Testis (tissue), 5 donors: ENCODE measurements at regions of chr14 and their contacts with region 1.

Region 1: DNA sequence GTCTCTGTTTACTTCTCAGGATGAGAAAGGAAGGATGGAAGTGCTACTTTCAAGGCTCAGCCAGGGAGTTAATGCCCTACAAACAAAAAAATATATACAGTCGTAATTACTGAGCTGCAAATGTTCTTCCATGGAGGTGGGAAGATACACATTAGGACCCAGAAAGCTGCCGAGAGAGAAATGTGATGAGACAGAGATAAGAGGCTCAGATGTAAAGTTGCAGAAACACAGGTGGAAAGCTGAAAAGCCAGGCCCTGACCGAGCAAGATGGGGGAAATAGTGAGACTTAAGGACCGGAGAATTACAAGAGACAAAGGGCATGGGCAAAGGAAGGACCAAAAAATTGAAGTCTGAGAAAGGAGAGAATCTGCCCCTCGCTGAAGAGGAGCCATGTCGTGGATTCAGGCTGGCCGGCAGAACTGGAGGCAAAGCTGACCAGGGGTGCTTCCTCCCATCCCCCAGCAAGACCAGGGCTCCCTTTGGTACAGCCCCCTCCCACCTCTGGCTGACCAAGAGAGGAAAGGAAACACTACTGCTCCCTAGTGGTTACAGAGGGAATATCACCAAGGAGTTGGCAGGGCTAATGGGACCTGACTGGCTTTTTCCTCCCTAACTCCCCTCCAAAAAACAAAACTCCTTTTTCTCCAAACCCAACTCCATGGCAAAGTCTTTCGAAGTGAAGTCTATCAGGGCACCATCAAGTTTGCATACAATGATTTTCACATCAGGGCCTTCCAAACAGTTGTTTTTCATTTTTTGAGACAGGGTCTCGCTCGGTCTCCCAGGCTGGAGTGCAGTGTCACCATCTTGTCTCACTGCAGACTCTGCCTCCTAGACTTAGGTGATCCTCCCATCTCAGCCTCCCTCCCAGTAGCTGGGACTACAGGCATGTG is 12.1 kb downstream of the ZFHX2 start:
- DNase-seq: peak; percentile 33
- H3K4me3 ChIP-seq: no peak overlapping the region
- H3K27ac ChIP-seq: no peak overlapping the region
- H3K4me1 ChIP-seq: no peaks in the 10 kb centered on the region
- H3K27me3 ChIP-seq: no peaks in the 10 kb centered on the region
- CTCF ChIP-seq: peak; percentile 52 to 83 (median 69)
- POLR2A ChIP-seq: no peak

Region 2: GRCh38 chr14:23483236-23483854 is 56.1 kb before region 1 on chr14:
- intact Hi-C with region 1: loop called (anchors 10 kb)
- DNase-seq: peak; percentile 28
- H3K4me3 ChIP-seq: no peak overlapping the region
- H3K27ac ChIP-seq: no peak overlapping the region
- H3K4me1 ChIP-seq: no peaks in the 10 kb centered on the region
- H3K27me3 ChIP-seq: no peaks in the 10 kb centered on the region
- CTCF ChIP-seq: peak in 2 of 3 experiments; percentile 6 to 14
- POLR2A ChIP-seq: no peak

Region 3: GRCh38 chr14:24037665-24038051 is 498.2 kb after region 1 on chr14:
- intact Hi-C with region 1: no loop called
- DNase-seq: no peak
- H3K4me3 ChIP-seq: no peak overlapping the region
- H3K27ac ChIP-seq: no peak overlapping the region
- H3K4me1 ChIP-seq: no peaks in the 10 kb centered on the region
- H3K27me3 ChIP-seq: no peaks in the 10 kb centered on the region
- CTCF ChIP-seq: no peak
- POLR2A ChIP-seq: no peak